IMR-90 (cell line): ENCODE measurements at regions of chr14 and their contacts with region 1.

Region 1: GRCh38 chr14:62162998-62163589 is 400.9 kb downstream of the SNAPC1 start:
- DNase-seq: peak; percentile 56
- ATAC-seq: peak; percentile 84
- H3K4me3 ChIP-seq: no peak overlapping the region
- H3K27ac ChIP-seq: no peak overlapping the region
- H3K4me1 ChIP-seq: no peaks in the 10 kb centered on the region
- H3K27me3 ChIP-seq: peaks cover 15% of the 10 kb centered on the region
- CTCF ChIP-seq: peak; percentile 82
- POLR2A ChIP-seq: no peak
- RAD21 ChIP-seq: peak; percentile 87

Region 2: DNA sequence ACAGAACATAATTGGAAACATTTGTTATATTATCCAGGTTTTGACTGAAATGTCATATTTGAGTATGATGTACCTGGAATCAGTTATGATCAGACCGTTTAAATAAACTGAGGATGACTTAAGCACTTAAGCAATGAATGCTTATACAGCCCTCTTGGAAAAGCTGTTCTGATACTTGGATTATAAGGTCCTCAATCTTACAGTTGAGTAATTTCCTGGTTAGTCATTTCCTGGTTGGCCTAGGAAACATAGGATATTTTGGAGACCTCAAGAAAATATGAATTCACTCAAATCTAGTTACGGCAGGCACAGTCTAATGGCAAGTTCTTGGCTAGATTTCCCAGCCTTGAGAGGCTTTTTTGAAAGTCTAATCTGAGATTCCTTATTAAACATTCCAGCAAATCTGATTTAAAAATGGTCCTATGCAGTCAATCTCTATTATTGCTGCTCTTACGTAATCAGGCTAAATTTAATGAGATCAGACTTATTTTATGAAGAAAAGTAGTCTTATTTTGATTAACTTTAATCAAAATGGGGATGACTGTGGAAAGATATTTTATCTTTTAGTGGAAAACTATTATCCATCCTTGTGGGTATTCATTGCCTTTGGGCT is 46.3 kb after region 1 on chr14:
- CTCF ChIA-PET with region 1: no interaction called
- POLR2A ChIA-PET with region 1: no interaction called
- dilution Hi-C with region 1: no loop called
- in situ Hi-C with region 1: no loop called
- intact Hi-C with region 1: no loop called
- DNase-seq: peak; percentile 89
- ATAC-seq: peak; percentile 74
- H3K4me3 ChIP-seq: no peak overlapping the region
- H3K27ac ChIP-seq: no peak overlapping the region
- H3K4me1 ChIP-seq: 0 out of 2 replicates have a peak, but pooled peaks cover 1% of the 10 kb centered on the region
- H3K27me3 ChIP-seq: no peaks in the 10 kb centered on the region
- CTCF ChIP-seq: no peak
- POLR2A ChIP-seq: no peak
- RAD21 ChIP-seq: no peak

Region 3: GRCh38 chr14:63134801-63135200 is 971.7 kb after region 1 on chr14:
- CTCF ChIA-PET with region 1: no interaction called
- POLR2A ChIA-PET with region 1: no interaction called
- dilution Hi-C with region 1: no loop called
- in situ Hi-C with region 1: no loop called
- intact Hi-C with region 1: loop called (anchors 2 kb)
- DNase-seq: peak; percentile 35
- ATAC-seq: peak; percentile 59; the same call in 1 of the 2 replicates
- H3K4me3 ChIP-seq: no peak overlapping the region
- H3K27ac ChIP-seq: no peak overlapping the region
- H3K4me1 ChIP-seq: no peaks in the 10 kb centered on the region
- H3K27me3 ChIP-seq: no peaks in the 10 kb centered on the region
- CTCF ChIP-seq: peak; percentile 42
- POLR2A ChIP-seq: no peak
- RAD21 ChIP-seq: peak; percentile 45

Region 4: DNA sequence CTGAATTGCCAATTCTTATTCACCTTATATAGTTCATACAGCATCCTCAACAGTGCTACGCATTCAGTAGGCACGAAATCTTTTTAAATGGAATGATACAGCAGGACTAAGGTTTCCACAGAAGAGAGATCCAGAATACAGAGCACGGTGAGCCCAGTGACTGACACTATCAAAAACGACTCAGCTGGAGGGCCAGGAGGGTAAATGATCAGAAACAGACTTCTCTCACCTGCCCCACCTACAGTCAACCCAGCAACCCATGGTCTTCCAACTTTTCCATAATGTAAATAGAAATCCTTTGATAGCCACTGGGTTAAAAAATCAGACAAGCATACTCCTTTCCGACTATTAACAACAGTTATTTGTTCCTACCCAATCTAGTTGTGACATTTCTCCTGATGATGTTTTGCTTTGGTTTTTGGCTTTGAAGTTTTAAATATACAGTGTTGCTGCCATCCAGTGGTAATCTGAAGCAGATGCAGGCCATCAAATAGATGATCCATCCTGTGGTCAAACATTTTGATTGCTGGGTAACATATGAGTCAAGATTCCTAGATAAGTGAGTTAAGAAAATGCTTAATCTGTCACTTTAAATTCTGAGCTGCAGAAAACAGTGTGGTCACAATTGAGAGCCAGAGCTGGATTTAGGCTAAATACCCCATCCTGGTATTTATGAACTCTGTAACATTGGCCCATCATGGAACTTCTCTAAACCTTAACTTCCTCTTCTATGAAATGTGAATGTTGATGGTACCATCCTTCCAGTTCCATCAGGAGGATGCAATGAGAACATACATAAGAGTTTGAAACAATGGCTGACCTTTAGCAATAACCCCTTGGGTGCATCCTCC is 1113.6 kb after region 1 on chr14:
- CTCF ChIA-PET with region 1: interaction called, 3 read pairs
- POLR2A ChIA-PET with region 1: no interaction called
- dilution Hi-C with region 1: no loop called
- in situ Hi-C with region 1: loop called (anchors 5 kb)
- intact Hi-C with region 1: loop called (anchors 1 kb)
- DNase-seq: peak; percentile 64
- ATAC-seq: peak; percentile 85
- H3K4me3 ChIP-seq: no peak overlapping the region
- H3K27ac ChIP-seq: no peak overlapping the region
- H3K4me1 ChIP-seq: no peaks in the 10 kb centered on the region
- H3K27me3 ChIP-seq: no peaks in the 10 kb centered on the region
- CTCF ChIP-seq: peak; percentile 88
- POLR2A ChIP-seq: no peak
- RAD21 ChIP-seq: peak; percentile 85

Region 5: GRCh38 chr14:63371033-63371432 is 1207.9 kb after region 1 on chr14:
- CTCF ChIA-PET with region 1: no interaction called
- POLR2A ChIA-PET with region 1: no interaction called
- dilution Hi-C with region 1: no loop called
- in situ Hi-C with region 1: no loop called
- intact Hi-C with region 1: loop called (anchors 5 kb)
- DNase-seq: no peak
- ATAC-seq: no peak
- H3K4me3 ChIP-seq: no peak overlapping the region
- H3K27ac ChIP-seq: no peak overlapping the region
- H3K4me1 ChIP-seq: no peaks in the 10 kb centered on the region
- H3K27me3 ChIP-seq: no peaks in the 10 kb centered on the region
- CTCF ChIP-seq: no peak
- POLR2A ChIP-seq: no peak
- RAD21 ChIP-seq: no peak

Region 6: DNA sequence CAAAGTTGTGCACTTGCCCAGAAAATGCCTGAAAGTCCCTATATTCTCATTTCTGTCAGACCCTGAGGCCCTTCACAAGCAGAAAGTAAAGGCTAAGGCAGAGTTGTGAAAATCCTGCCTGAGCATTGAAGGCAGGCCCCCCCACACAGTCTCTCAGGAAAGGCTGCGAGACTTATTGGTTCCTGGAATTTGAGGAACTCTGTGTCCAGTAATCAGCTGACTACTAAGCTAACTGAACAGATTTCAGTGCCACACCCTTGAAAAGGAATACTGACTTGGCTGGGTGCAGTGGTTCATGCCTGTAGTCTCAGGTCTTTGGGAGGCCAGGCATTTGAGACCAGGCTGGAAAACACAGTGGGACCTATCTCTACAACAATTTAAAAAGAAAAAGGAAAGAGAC is 1401.2 kb after region 1 on chr14:
- CTCF ChIA-PET with region 1: no interaction called
- POLR2A ChIA-PET with region 1: no interaction called
- dilution Hi-C with region 1: no loop called
- in situ Hi-C with region 1: loop called (anchors 25 kb)
- intact Hi-C with region 1: no loop called
- DNase-seq: no peak
- ATAC-seq: peak; percentile 27; the same call in 1 of the 2 replicates
- H3K4me3 ChIP-seq: no peak overlapping the region
- H3K27ac ChIP-seq: no peak overlapping the region
- H3K4me1 ChIP-seq: no peaks in the 10 kb centered on the region
- H3K27me3 ChIP-seq: peaks cover 4% of the 10 kb centered on the region; the same call in 1 of the 2 replicates
- CTCF ChIP-seq: no peak
- POLR2A ChIP-seq: no peak
- RAD21 ChIP-seq: no peak

Region 7: DNA sequence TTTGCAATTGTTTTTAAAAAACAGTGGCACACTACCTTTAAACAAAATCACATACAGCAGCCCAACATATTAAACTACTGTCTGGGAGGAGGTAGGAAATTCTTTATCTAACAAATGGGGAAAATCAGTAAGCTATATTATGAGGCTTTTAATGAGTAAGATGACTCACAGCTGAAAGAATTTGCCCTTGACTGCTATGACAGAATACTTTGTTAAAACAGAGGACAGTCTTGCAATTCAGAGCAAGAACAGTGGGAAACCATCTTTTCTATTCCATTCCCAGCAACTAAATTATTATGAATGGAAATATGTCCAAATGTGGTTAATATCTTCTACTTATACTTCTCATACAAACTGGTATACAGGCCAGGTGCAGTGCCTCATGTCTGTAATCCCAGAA is 1613.9 kb after region 1 on chr14:
- CTCF ChIA-PET with region 1: no interaction called
- POLR2A ChIA-PET with region 1: no interaction called
- dilution Hi-C with region 1: no loop called
- in situ Hi-C with region 1: loop called (anchors 25 kb)
- intact Hi-C with region 1: no loop called
- DNase-seq: peak; percentile 69
- ATAC-seq: peak; percentile 86
- H3K4me3 ChIP-seq: no peak overlapping the region
- H3K27ac ChIP-seq: no peak overlapping the region
- H3K4me1 ChIP-seq: peaks cover 3% of the 10 kb centered on the region; the same call in 1 of the 2 replicates
- H3K27me3 ChIP-seq: no peaks in the 10 kb centered on the region
- CTCF ChIP-seq: no peak
- POLR2A ChIP-seq: no peak
- RAD21 ChIP-seq: no peak